Upper lobe of right lung (tissue), 1 donor: ENCODE measurements at regions of chr16 and their contacts with region 1.

Region 1: GRCh38 chr16:10971560-10971961 is 27.2 kb downstream of the CLEC16A start:
- DNase-seq: no peak
- ATAC-seq: peak; percentile 84
- H3K4me3 ChIP-seq: no peak overlapping the region
- H3K27ac ChIP-seq: no peak overlapping the region
- H3K4me1 ChIP-seq: peaks cover 8% of the 10 kb centered on the region
- H3K27me3 ChIP-seq: no peaks in the 10 kb centered on the region
- CTCF ChIP-seq: peak; percentile 73

Region 2: GRCh38 chr16:10678655-10679054 is 292.9 kb before region 1 on chr16:
- intact Hi-C with region 1: no loop called
- DNase-seq: no peak
- ATAC-seq: no peak
- H3K4me3 ChIP-seq: no peak overlapping the region
- H3K27ac ChIP-seq: no peak overlapping the region
- H3K4me1 ChIP-seq: no peaks in the 10 kb centered on the region
- H3K27me3 ChIP-seq: no peaks in the 10 kb centered on the region
- CTCF ChIP-seq: no peak

Region 3: GRCh38 chr16:10868596-10869469 is 102.7 kb before region 1 on chr16:
- intact Hi-C with region 1: no loop called
- DNase-seq: peak; percentile 74
- ATAC-seq: peak; percentile 68
- H3K4me3 ChIP-seq: peak overlapping the region; percentile 9
- H3K27ac ChIP-seq: peak overlapping the region; percentile 44
- H3K4me1 ChIP-seq: peaks cover 45% of the 10 kb centered on the region
- H3K27me3 ChIP-seq: no peaks in the 10 kb centered on the region
- CTCF ChIP-seq: no peak

Region 4: DNA sequence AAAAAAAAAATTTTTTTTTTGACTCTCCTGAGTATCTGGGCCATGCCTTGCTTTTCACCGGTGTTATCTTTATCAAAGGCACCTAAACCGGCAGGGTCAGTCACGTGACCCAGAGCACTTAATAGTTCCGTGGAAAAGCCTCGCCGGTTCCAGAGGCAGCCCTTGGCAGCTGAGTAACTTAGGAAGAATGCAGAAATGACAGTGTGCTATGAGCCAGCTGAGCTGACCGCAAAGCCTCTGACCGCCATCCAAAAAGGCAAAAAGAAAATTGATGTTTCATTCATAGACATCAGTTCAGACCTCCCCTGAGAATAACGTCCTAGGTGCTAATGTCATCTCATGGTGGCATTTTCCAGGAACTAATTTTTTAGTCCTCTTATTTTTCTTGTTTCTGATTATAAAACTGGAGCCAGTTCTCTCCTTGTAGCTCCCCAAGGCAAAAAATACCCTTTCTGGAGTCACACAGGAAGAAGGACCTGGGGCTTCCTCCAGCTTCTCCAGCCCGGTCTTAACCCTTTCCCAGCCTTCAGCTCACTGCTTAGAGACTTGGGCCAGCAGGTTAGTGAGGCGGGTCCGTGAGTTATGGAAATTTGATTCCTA is 161.9 kb after region 1 on chr16:
- intact Hi-C with region 1: no loop called
- DNase-seq: peak; percentile 82
- ATAC-seq: peak; percentile 83
- H3K4me3 ChIP-seq: no peak overlapping the region
- H3K27ac ChIP-seq: peak overlapping the region; percentile 7
- H3K4me1 ChIP-seq: peaks cover 58% of the 10 kb centered on the region
- H3K27me3 ChIP-seq: no peaks in the 10 kb centered on the region
- CTCF ChIP-seq: no peak

Region 5: GRCh38 chr16:11254913-11255736 is 283.6 kb after region 1 on chr16:
- intact Hi-C with region 1: loop called (anchors 5 kb)
- DNase-seq: peak; percentile 80
- ATAC-seq: peak; percentile 1
- H3K4me3 ChIP-seq: peak overlapping the region; percentile 81
- H3K27ac ChIP-seq: peak overlapping the region; percentile 98
- H3K4me1 ChIP-seq: peaks cover 34% of the 10 kb centered on the region
- H3K27me3 ChIP-seq: no peaks in the 10 kb centered on the region
- CTCF ChIP-seq: no peak

Region 6: GRCh38 chr16:11484691-11485258 is 513.2 kb after region 1 on chr16:
- intact Hi-C with region 1: no loop called
- DNase-seq: no peak
- ATAC-seq: no peak
- H3K4me3 ChIP-seq: no peak overlapping the region
- H3K27ac ChIP-seq: no peak overlapping the region
- H3K4me1 ChIP-seq: no peaks in the 10 kb centered on the region
- H3K27me3 ChIP-seq: no peaks in the 10 kb centered on the region
- CTCF ChIP-seq: no peak